ENCODE measurements at regions of chr4 and their contacts with region 1.

Region 1: DNA sequence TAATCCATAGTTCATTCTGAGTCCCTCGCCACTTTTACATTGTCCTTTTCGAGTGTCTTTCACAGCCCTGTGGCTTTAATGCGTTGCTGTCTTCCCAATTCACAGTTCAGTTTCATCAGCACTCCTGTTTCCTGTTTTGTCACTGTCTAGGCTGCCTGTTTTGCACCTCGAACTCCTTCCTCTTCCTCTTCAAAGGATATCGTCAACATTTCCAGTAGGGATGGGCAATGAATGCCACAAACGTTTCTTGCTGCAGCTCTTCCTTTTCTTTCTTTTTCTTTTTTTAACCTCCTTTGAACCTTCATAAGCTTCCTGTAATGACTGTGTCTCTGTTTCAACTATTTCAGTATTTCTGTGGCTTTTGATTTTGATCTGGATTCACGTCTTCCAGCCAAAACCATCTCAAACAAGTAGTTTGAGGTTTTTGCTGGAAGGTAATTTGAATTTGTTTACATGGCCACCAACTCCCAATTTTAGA is 105.4 kb downstream of the ANXA3 start:
- DNase-seq: peak; percentile 24
- H3K4me3 Mint-ChIP-seq: peak overlapping the region; percentile 51
- H3K27ac Mint-ChIP-seq: peak overlapping the region; percentile 48
- H3K4me1 Mint-ChIP-seq: peaks cover 61% of the 10 kb centered on the region
- H3K27me3 Mint-ChIP-seq: no peaks in the 10 kb centered on the region

Region 2: DNA sequence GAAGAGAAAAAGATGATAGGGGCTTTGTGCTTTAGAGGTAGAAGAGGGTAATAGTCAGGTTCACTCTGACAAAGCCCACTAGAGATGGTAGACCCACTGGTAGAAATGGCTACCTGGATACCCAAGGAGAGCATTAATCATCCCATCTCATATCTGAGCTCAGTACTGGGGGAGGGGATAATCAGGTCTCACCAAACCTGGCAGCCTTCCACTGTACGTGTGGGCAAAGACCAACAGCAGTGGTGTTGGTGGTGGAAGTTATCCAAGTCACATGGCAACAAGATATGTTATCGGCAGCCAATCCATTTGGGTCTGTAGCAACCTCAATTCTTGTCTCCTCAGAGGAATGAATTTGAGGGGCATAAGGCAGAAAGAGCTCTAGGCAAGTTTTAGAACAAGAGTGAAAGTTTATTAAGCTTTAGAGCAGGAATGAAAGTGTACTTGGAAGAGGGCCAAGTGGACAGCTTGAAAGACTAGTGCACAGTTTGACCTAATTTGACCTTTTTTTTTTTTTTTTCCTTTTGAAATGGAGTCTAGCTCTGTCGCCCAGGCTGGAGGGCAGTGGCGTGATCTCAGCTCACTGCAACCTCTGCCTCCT is 1118.3 kb before region 1 on chr4:
- intact Hi-C with region 1: loop called (anchors 2 kb)
- DNase-seq: no peak
- H3K4me3 Mint-ChIP-seq: peak overlapping the region; percentile 20
- H3K27ac Mint-ChIP-seq: peak overlapping the region; percentile 88
- H3K4me1 Mint-ChIP-seq: peaks cover 40% of the 10 kb centered on the region
- H3K27me3 Mint-ChIP-seq: peaks cover 5% of the 10 kb centered on the region

Region 3: GRCh38 chr4:78312989-78313753 is 343.8 kb before region 1 on chr4:
- intact Hi-C with region 1: loop called (anchors 5 kb)
- DNase-seq: no peak
- H3K4me3 Mint-ChIP-seq: peak overlapping the region; percentile 10
- H3K27ac Mint-ChIP-seq: no peak overlapping the region
- H3K4me1 Mint-ChIP-seq: peaks cover 22% of the 10 kb centered on the region
- H3K27me3 Mint-ChIP-seq: peaks cover 10% of the 10 kb centered on the region

Region 4: DNA sequence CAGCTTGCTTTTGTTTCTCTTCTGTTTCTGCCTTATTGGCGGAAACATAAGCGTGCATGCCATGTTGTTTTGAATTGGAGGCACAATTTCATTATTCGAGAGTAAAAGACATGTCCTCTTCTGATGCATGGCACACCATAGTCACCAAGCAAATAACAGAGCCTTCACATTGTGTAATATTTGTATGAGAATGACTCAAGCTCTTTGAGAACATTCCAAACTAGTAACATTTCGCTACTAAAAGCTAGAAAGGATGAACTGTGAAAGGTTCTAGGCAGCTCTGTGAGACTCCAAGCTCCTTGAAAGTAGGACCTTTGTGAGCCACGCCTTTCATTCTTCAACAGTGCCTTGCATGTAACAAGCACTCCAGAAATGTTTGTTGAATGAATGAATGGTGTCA is 114.6 kb before region 1 on chr4:
- intact Hi-C with region 1: no loop called
- DNase-seq: no peak
- H3K4me3 Mint-ChIP-seq: no peak overlapping the region
- H3K27ac Mint-ChIP-seq: no peak overlapping the region
- H3K4me1 Mint-ChIP-seq: no peaks in the 10 kb centered on the region
- H3K27me3 Mint-ChIP-seq: peaks cover 14% of the 10 kb centered on the region

Region 5: GRCh38 chr4:78720994-78721677 is 64.1 kb after region 1 on chr4:
- intact Hi-C with region 1: loop called (anchors 2 kb)
- DNase-seq: peak; percentile 4
- H3K4me3 Mint-ChIP-seq: peak overlapping the region; percentile 66
- H3K27ac Mint-ChIP-seq: peak overlapping the region; percentile 71
- H3K4me1 Mint-ChIP-seq: peaks cover 20% of the 10 kb centered on the region
- H3K27me3 Mint-ChIP-seq: no peaks in the 10 kb centered on the region

Region 6: GRCh38 chr4:78938868-78939666 is 282.1 kb after region 1 on chr4 and contains the start of gene PAQR3:
- intact Hi-C with region 1: loop called (anchors 1 kb)
- DNase-seq: peak; percentile 82
- H3K4me3 Mint-ChIP-seq: peak within 1 kb of the TSS; percentile 97
- H3K27ac Mint-ChIP-seq: peak within 1 kb of the TSS; percentile 88
- H3K4me1 Mint-ChIP-seq: peaks cover 47% of the 10 kb centered on the region
- H3K27me3 Mint-ChIP-seq: peaks cover 16% of the 10 kb centered on the region
- total RNA-seq, gene PAQR3: 19.6 and 19.8 TPM in 2 replicates

Region 7: DNA sequence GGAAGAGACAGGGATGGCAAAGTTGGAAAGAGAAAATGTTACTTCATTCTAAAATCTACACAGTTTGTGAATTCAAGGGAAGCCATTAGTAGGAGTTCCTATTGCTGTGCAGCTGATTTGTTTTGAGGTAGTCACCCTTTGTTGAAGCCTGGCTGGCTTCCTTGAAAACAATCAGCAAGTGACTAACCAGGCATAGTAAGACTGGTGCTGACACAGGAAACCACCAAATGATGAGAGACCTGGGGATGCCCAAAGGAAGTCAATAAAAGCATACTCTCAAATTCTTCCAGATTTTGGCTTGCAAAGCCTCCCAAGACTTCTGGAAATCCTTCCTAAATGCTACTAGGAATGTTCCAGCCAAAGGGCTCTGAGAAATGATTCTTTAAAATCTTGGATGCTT is 1516.4 kb after region 1 on chr4:
- intact Hi-C with region 1: loop called (anchors 2 kb)
- DNase-seq: peak; percentile 66
- H3K4me3 Mint-ChIP-seq: peak overlapping the region; percentile 50
- H3K27ac Mint-ChIP-seq: peak overlapping the region; percentile 92
- H3K4me1 Mint-ChIP-seq: peaks cover 68% of the 10 kb centered on the region
- H3K27me3 Mint-ChIP-seq: no peaks in the 10 kb centered on the region

Measured in activated T-helper 1 cell treated with anti-CD3 and anti-CD28 coated beads, Interleukin-12 subunit alpha, Interleukin-12 subunit beta, Interleukin-2, Interleukin-4 antibody, amounts not matched to agents 30 ng/mL and 10 ng/mL and 1 ng/mL, durations not matched to agents 14 hours and 24 hours and 36 hours (primary cell).